Activated T-helper 2 cell treated with anti-CD3 and anti-CD28 coated beads, Interferon-gamma antibody, Interleukin-2, Interleukin-4, amounts not matched to agents 10 μg/mL and 5 μg/mL and 100 μg/mL, durations not matched to agents 14 hours and 24 hours and 36 hours (primary cell): ENCODE measurements at regions of chr3 and their contacts with region 1.

Region 1: DNA sequence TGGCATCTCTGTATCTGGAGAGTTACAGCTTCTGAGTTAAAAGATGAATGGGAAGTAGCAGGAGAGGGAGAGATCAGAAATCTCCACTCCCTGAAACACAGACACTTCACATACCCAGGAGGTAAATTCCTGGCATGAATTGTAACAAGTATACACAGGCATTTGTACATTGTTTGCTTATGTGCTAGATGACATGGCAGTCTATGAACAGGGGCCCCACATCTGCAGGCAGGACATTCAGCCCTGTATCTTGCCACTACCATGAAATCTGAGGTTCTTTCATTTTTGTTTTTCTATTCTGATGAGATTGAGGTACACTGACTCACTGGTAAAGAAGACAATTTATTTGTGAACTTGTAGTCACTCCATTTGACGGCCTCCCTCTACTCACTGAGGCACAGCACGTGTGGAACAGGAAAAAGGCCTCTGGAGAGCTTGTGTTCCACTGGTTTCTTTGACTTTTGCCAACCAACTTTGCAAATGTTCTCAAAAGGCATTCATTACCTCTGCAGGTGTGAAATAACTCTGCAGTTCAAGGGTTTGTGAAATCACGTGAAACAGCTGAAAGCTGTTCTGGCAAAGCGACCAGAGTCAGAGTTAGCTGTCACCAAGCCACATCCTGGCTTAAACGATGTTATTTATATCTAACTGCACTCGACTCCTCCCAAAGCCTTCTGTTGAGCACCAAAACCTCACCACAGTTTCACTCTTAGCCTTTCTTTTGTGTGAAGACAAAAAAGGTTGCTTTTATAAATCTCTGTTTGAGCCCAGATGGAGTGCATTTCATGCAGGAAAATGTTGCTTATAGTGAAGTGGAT is 401.3 kb upstream of the CFAP20DC start:
- DNase-seq: peak; percentile 73
- H3K4me3 Mint-ChIP-seq: peak overlapping the region; percentile 34
- H3K27ac Mint-ChIP-seq: peak overlapping the region; percentile 85
- H3K4me1 Mint-ChIP-seq: peaks cover 61% of the 10 kb centered on the region
- H3K27me3 Mint-ChIP-seq: no peaks in the 10 kb centered on the region

Region 2: DNA sequence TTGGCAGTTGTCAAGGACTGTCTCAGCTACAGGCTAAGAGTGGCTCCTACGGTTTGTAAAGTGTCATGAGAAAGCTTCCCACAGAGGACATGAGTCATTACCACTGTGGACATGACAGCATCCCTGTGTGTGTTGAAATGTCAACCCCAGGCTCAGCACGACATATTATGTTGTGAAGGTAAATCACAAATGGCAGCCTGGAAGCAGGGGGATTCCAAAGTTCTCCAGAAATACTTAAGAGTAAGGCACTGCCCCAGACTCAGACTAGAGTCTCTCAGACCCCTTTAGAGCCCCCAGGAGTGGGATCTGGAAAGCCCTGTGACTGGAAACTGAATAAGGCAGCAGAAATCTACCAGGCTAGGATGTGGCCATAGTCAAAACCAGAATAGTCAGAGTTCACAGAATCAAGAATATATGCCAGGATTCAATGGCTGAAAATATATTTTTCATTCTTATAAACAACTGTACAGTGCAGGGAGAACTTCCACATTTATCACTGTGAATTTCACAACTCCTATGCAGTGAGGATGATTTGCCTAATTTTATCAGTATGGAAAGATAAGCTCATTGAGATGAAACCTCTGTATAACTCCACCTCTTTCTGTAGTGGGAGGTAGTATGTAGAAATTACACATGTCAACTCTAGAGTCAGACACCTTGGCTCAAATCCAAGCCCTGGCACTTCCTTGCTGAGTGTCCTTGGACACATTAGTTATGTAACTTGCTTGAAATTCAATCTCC is 164.2 kb before region 1 on chr3:
- intact Hi-C with region 1: loop called (anchors 2 kb)
- DNase-seq: peak; percentile 9
- H3K4me3 Mint-ChIP-seq: no peak overlapping the region
- H3K27ac Mint-ChIP-seq: peak overlapping the region; percentile 86
- H3K4me1 Mint-ChIP-seq: peaks cover 20% of the 10 kb centered on the region
- H3K27me3 Mint-ChIP-seq: peaks cover 4% of the 10 kb centered on the region

Region 3: DNA sequence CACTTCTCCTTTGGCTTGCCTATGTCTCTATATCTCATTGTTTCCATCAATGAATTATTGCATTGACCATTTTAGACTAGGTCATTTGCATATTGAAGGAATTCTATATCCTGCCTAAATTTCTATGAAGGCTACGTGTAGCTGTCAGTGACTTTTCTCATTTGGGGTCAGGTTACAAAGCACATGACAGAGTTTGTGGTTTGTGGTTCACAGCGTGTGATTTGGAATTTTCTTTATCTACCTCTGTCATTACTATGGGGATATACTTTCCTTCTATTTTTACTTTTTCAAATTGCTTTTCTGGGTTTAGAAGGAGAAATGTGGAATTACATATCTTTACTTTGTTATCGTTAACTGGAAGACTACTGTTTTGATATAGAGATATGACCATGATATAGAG is 84.0 kb before region 1 on chr3:
- intact Hi-C with region 1: no loop called
- DNase-seq: no peak
- H3K4me3 Mint-ChIP-seq: no peak overlapping the region
- H3K27ac Mint-ChIP-seq: no peak overlapping the region
- H3K4me1 Mint-ChIP-seq: peaks cover 21% of the 10 kb centered on the region
- H3K27me3 Mint-ChIP-seq: no peaks in the 10 kb centered on the region

Region 4: GRCh38 chr3:59426821-59427565 is 24.2 kb before region 1 on chr3:
- intact Hi-C with region 1: loop called (anchors 1 kb)
- DNase-seq: no peak
- H3K4me3 Mint-ChIP-seq: no peak overlapping the region
- H3K27ac Mint-ChIP-seq: peak overlapping the region; percentile 46
- H3K4me1 Mint-ChIP-seq: peaks cover 46% of the 10 kb centered on the region
- H3K27me3 Mint-ChIP-seq: no peaks in the 10 kb centered on the region

Region 5: GRCh38 chr3:59480486-59480995 is 29.4 kb after region 1 on chr3:
- intact Hi-C with region 1: loop called (anchors 2 kb)
- DNase-seq: no peak
- H3K4me3 Mint-ChIP-seq: peak overlapping the region; percentile 54
- H3K27ac Mint-ChIP-seq: peak overlapping the region; percentile 78
- H3K4me1 Mint-ChIP-seq: peaks cover 24% of the 10 kb centered on the region
- H3K27me3 Mint-ChIP-seq: no peaks in the 10 kb centered on the region

Region 6: GRCh38 chr3:59502806-59503205 is 51.7 kb after region 1 on chr3:
- intact Hi-C with region 1: no loop called
- DNase-seq: no peak
- H3K4me3 Mint-ChIP-seq: no peak overlapping the region
- H3K27ac Mint-ChIP-seq: no peak overlapping the region
- H3K4me1 Mint-ChIP-seq: peaks cover 7% of the 10 kb centered on the region
- H3K27me3 Mint-ChIP-seq: no peaks in the 10 kb centered on the region

Region 7: GRCh38 chr3:59540696-59541095 is 89.5 kb after region 1 on chr3:
- intact Hi-C with region 1: no loop called
- DNase-seq: no peak
- H3K4me3 Mint-ChIP-seq: no peak overlapping the region
- H3K27ac Mint-ChIP-seq: no peak overlapping the region
- H3K4me1 Mint-ChIP-seq: peaks cover 18% of the 10 kb centered on the region
- H3K27me3 Mint-ChIP-seq: peaks cover 4% of the 10 kb centered on the region

Region 8: DNA sequence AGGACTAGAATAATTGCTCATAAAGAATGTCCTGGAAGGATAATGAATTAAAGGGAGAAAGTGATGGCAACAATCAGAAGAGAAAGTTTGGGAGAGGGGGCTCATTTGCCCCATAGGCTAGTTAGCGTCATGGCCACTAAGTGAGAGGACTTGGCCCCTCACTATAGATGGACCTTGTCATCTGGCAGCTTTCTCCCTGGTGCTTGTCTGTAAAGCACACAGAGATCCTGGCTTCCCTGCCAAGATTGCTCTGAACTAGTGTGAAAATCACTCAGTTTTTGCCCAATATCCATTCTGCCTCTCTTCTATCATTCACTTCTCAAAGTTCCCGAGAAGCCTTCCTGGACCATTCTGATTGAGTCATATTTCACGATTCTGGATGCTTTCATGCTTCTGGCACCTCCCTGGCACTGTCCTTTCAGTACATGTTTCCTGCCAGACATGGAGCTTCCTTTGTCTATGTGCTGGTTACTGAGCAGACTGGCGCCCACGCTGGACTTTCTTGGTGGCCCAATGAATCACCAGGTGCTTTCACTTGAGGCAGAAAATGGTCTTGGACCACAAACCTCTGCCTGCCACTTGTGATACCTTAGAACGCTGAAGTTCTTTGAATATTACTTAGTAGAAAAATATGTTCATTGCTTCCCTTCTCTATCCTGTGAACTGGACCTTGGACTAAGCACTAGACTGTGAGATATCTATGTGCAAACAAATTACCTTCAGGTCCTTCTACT is 308.3 kb after region 1 on chr3:
- intact Hi-C with region 1: loop called (anchors 10 kb)
- DNase-seq: no peak
- H3K4me3 Mint-ChIP-seq: no peak overlapping the region
- H3K27ac Mint-ChIP-seq: peak overlapping the region; percentile 9
- H3K4me1 Mint-ChIP-seq: peaks cover 71% of the 10 kb centered on the region
- H3K27me3 Mint-ChIP-seq: no peaks in the 10 kb centered on the region

Region 9: DNA sequence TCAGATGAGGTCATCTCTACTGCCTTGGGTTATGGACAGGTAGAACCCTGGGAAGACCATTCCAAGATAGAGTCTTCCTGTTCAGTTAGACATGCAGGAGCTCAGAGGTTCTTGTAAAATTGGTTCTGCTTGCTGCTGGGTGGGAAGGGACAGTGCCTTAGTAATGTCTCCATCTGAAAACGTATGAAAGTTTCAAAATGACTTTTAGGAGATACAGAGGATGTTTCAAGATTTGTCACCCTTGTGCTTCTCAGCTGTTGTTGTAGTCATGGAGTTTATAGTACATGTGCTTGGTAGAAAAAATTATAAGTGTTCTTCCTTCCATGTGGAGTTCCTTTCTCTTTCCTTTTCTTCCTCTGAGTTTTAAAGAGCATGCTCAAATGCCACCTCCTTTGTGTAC is 483.9 kb after region 1 on chr3:
- intact Hi-C with region 1: loop called (anchors 10 kb)
- DNase-seq: no peak
- H3K4me3 Mint-ChIP-seq: no peak overlapping the region
- H3K27ac Mint-ChIP-seq: peak overlapping the region; percentile 69
- H3K4me1 Mint-ChIP-seq: peaks cover 38% of the 10 kb centered on the region
- H3K27me3 Mint-ChIP-seq: no peaks in the 10 kb centered on the region

Region 10: DNA sequence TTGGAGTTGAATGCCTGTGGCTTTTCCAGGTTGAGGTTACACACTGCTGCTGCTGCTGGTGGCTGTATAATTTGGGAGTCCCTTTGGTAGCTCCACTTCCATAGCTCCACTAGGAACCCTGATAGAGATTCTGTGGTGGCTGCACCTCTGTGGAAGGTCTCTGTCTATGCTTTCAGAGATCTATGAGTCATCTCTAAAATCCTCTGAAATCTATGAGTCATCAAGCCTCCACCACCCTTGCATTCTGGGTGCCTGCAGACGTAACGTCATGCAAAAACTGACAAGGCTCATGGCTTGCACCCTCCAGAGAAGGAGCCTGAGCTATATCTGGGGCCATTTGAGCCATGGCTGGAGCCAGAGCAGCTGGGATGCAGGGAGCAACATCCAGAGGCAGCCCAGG is 635.7 kb after region 1 on chr3:
- intact Hi-C with region 1: loop called (anchors 10 kb)
- DNase-seq: peak; percentile 50
- H3K4me3 Mint-ChIP-seq: no peak overlapping the region
- H3K27ac Mint-ChIP-seq: peak overlapping the region; percentile 91
- H3K4me1 Mint-ChIP-seq: peaks cover 48% of the 10 kb centered on the region
- H3K27me3 Mint-ChIP-seq: no peaks in the 10 kb centered on the region